A673 (cell line): ENCODE measurements at regions of chr20 and their contacts with region 1.

Region 1: DNA sequence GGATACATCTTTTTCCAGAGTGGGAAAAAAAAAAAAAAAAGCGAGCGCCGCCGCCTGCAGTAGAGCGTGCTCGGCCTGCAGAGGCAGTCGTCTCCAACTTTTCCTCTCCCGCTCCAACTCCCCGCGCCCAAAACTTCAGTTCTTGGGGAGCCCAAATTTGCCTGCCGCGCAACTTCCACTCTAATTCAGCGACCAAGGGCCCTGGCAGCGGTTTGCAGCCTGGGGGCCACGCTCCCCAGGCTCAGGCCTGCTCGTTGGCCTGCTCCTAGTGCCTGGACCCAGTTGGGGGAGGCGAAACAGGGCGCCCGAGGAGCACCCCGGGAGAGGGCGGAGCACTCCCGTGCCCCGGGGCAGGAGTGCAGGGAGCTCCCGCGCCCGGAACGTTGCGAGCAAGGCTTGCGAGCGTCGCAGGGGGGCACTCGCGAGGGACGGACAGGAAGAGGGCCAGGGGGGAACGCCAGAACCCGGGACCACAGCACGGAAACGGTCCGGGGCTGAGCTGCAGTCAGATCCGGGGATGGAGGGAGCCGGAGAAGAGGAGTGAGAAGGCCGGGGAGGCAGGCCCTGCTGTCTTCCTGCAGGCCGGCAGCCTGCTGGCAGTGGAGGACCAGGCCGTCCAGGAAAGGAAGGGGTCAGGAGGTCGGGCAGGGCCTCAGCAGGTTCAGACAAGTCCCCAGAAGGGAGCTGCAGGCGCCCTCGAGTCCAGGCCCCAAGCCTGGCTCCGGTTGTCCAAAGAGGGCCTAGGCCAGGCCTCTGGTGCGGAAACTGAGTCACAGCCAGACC is at the start of gene STX16:
- DNase-seq: peak; percentile 97
- H3K4me3 ChIP-seq: peak within 1 kb of the TSS; percentile 95
- H3K27ac ChIP-seq: peak within 1 kb of the TSS; percentile 86
- H3K4me1 ChIP-seq: peaks cover 21% of the 10 kb centered on the region
- H3K27me3 ChIP-seq: no peaks in the 10 kb centered on the region
- CTCF ChIP-seq: peak; percentile 86
- total RNA-seq, gene STX16: 44.5 and 53.4 TPM in 2 replicates

Region 2: GRCh38 chr20:58236612-58237330 is 414.2 kb before region 1 on chr20:
- CTCF ChIA-PET with region 1: no interaction called
- POLR2A ChIA-PET with region 1: no interaction called
- intact Hi-C with region 1: loop called (anchors 2 kb)
- DNase-seq: peak; percentile 84
- H3K4me3 ChIP-seq: peak overlapping the region; percentile 43
- H3K27ac ChIP-seq: no peak overlapping the region
- H3K4me1 ChIP-seq: no peaks in the 10 kb centered on the region
- H3K27me3 ChIP-seq: no peaks in the 10 kb centered on the region
- CTCF ChIP-seq: peak; percentile 97

Region 3: DNA sequence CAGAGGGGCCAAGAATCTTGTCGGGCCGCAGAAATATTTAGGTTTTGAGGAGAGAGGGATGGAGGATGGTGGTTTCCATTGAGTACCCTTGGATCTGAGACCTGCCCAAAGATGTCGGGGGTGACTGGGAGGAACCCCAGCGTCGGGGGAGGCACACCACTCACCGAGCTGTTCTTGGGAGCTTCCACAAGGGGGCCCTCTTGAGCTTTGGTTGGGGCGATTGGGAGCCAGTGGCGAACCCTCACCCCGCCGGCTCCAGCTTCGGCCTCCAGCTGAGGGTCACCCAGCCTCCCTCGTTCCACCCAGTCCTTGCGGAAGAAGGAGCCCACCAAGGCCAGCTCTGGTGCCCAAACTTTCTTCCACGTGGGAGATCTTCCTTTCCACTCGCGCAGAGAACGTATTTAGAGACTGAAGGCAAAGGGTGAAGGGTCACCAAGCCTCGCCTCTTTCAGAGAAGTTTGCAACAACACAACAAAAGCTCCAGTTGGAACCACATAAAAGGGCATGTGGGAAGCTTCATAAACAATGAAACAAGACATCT is 169.4 kb before region 1 on chr20:
- CTCF ChIA-PET with region 1: interaction called, 10 read pairs
- POLR2A ChIA-PET with region 1: no interaction called
- intact Hi-C with region 1: loop called (anchors 5 kb)
- DNase-seq: peak; percentile 61
- H3K4me3 ChIP-seq: no peak overlapping the region
- H3K27ac ChIP-seq: no peak overlapping the region
- H3K4me1 ChIP-seq: no peaks in the 10 kb centered on the region
- H3K27me3 ChIP-seq: no peaks in the 10 kb centered on the region
- CTCF ChIP-seq: peak; percentile 78

Region 4: GRCh38 chr20:58850693-58851174 is 199.8 kb after region 1 on chr20 and contains the start of gene GNAS-AS1:
- CTCF ChIA-PET with region 1: interaction called, 3 read pairs
- POLR2A ChIA-PET with region 1: no interaction called
- intact Hi-C with region 1: loop called (anchors 5 kb)
- DNase-seq: peak; percentile 93
- H3K4me3 ChIP-seq: peak within 1 kb of the TSS; percentile 67
- H3K27ac ChIP-seq: peak within 1 kb of the TSS; percentile 19
- H3K4me1 ChIP-seq: peaks cover 8% of the 10 kb centered on the region
- H3K27me3 ChIP-seq: peaks cover 41% of the 10 kb centered on the region
- CTCF ChIP-seq: no peak
- total RNA-seq, gene GNAS-AS1: 6.7 and 7.1 TPM in 2 replicates